K562 (cell line): ENCODE measurements at regions of chr19 and their contacts with region 1.

Region 1: GRCh38 chr19:7852851-7853769 is 21.1 kb downstream of the PRR36 start:
- DNase-seq: peak; percentile 91 to 97 (median 94)
- ATAC-seq: peak; percentile 92
- H3K4me3 ChIP-seq: no peak overlapping the region
- H3K27ac ChIP-seq: no peak overlapping the region
- H3K4me1 ChIP-seq: peaks cover 13 to 74% of the 10 kb centered on the region in 2 experiments
- H3K27me3 ChIP-seq: peaks cover 15 to 37% of the 10 kb centered on the region in 2 experiments; a peak in 4 of 5 replicates
- CTCF ChIP-seq: peak; percentile 83 to 90 (median 86); a peak in 5 of 6 replicates
- EP300 ChIP-seq: no peak
- POLR2A ChIP-seq: no peak
- RAD21 ChIP-seq: peak; percentile 68 to 85

Region 2: DNA sequence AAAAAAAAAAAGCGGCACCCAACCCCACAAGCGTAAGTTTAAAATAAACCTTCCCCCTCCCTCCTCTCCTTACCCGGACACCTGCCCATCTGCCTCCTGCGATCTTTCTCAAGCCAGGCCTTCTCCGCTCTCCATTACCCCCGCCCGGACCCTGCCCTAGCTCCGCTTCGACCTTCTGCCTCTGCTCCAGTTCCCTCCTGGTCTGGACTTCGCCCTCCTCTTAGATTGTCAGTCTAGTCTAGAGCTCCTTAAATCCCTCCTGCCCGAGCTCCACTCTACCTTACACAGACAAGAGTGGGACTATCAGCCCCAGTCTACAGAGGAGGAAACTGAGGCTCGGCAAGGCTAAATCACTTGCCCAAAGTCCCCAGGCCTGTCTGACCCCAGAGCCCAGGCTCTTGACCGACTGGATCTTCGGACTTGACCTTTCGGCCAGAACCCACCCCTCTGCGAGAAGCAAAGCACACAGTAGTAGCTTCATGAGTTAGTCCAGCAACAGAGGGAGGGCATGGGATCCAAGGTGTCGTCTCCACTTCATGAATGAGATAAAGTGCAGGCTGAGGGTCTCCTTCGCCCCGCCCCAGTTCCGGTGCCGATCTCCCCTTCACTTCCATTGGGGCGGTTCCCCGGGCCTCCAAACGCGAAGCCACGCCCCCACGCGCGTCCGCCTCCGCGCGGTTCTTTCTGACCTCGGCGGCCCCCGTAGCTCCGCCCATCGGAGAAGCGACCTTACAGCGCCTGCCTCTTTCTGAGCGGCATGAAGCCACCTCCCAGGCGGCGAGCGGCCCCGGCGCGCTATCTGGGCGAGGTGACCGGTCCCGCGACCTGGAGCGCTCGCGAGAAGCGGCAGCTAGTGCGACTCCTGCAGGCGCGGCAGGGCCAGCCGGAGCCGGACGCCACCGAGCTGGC is 66.8 kb after region 1 on chr19 and contains the start of gene SNAPC2:
- CTCF ChIA-PET with region 1: interaction called, 5 read pairs
- POLR2A ChIA-PET with region 1: no interaction called
- in situ Hi-C with region 1: loop called (anchors 5 kb)
- intact Hi-C with region 1: loop called (anchors 1 kb)
- DNase-seq: peak; percentile 81 to 99 (median 85)
- ATAC-seq: peak; percentile 86
- H3K4me3 ChIP-seq: peak within 1 kb of the TSS; percentile 81
- H3K27ac ChIP-seq: peak within 1 kb of the TSS; percentile 89
- H3K4me1 ChIP-seq: peaks cover 9 to 73% of the 10 kb centered on the region in 2 experiments
- H3K27me3 ChIP-seq: no peaks in the 10 kb centered on the region
- CTCF ChIP-seq: peak in 2 of 3 experiments; percentile 5 to 21; a peak in 2 of 6 replicates
- EP300 ChIP-seq: no peak
- POLR2A ChIP-seq: peak; percentile 81
- RAD21 ChIP-seq: no peak
- polyA plus RNA-seq, gene SNAPC2: 0.59 to 1.4 TPM

Region 3: DNA sequence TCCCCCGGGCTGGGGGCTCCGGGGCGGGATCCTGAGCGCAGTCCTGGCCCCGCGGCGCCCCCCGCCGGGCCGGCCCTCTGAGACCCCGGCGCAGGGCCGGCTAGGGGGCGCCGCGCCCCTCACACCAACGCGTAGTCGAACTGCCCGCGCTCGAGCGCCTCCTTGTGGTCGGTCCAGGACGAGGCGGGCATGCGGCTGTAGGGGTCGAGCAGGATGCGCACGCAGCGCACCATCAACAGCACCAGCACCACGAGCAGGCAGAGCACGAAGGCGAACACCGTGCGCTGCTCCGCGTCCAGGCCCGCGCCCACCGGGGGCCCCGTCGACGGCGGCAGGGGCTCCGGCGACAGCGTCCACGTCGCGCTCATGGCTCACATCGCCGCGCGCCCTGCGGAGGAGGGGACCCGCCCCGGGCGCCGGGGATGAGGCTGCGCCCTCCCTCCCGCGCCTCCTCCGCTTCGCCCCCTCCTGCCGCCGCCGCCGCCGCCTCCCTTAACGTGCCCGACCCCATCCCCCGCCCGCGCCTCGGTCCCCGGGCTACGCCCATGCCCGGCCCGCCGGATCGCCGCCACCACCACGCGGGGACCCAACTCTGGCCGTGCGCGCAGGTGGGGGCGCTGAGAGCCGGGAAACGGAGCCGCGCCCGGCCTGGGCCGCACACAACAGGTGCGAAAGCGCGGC is 72.2 kb after region 1 on chr19:
- CTCF ChIA-PET with region 1: interaction called, 5 read pairs
- POLR2A ChIA-PET with region 1: no interaction called
- in situ Hi-C with region 1: loop called (anchors 5 kb)
- intact Hi-C with region 1: loop called (anchors 1 kb)
- DNase-seq: peak; percentile 75 to 93 (median 84)
- ATAC-seq: peak; percentile 57
- H3K4me3 ChIP-seq: peak overlapping the region; percentile 48
- H3K27ac ChIP-seq: peak overlapping the region; percentile 48; the same call in 1 of the 3 replicates
- H3K4me1 ChIP-seq: peaks cover 13 to 86% of the 10 kb centered on the region in 2 experiments
- H3K27me3 ChIP-seq: no peaks in the 10 kb centered on the region
- CTCF ChIP-seq: peak; percentile 90 to 98 (median 93)
- EP300 ChIP-seq: no peak
- POLR2A ChIP-seq: no peak
- RAD21 ChIP-seq: peak; percentile 52 to 77